ENCODE measurements at regions of chr19 and their contacts with region 1.

Region 1: GRCh38 chr19:41226053-41226873 is 7.2 kb downstream of the AXL start:
- DNase-seq: peak; percentile 70 to 81 (median 75)
- ATAC-seq: peak; percentile 27 to 81 (median 72)
- H3K4me3 ChIP-seq: peak overlapping the region; percentile 21 to 62 (median 53)
- H3K27ac ChIP-seq: peak overlapping the region; percentile 60 to 94 (median 79)
- H3K4me1 ChIP-seq: peaks cover 0 to 26% (median 14%) of the 10 kb centered on the region in 12 donors
- H3K27me3 ChIP-seq: peaks cover 0 to 17% (median 0%) of the 10 kb centered on the region in 9 donors
- CTCF ChIP-seq: peak in 2 of 12 donors; percentile 20 to 22
- POLR2A ChIP-seq: peak in 1 of 2 donors; percentile 18

Region 2: DNA sequence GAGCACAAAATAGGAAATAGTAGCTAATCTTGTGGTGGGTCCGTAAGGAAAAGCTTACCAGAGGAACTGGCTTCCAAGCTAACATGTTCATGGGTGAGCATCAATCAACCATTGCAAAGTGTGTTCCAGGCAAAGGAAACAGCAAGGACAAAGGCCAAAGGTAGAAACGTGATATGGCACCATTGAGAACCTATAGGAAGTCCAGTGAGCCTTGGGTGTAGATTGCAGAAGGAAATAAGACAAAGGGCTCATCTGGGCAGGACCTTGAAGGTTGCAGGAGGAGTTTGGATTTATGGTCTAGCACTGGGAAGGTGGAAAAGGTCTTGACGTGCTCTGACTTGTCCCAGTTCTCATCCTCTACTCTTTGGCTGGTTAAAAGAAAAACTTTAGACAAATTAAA is 212.9 kb before region 1 on chr19:
- intact Hi-C with region 1: no loop called
- DNase-seq: no peak
- ATAC-seq: no peak
- H3K4me3 ChIP-seq: no peak overlapping the region
- H3K27ac ChIP-seq: no peak overlapping the region
- H3K4me1 ChIP-seq: no peaks in the 10 kb centered on the region
- H3K27me3 ChIP-seq: peaks cover 0 to 31% (median 8%) of the 10 kb centered on the region in 9 donors
- CTCF ChIP-seq: no peak
- POLR2A ChIP-seq: no peak

Region 3: GRCh38 chr19:41298348-41298964 is 72.2 kb after region 1 on chr19:
- intact Hi-C with region 1: loop called in 1 of 10 experiments (anchors 2 kb)
- DNase-seq: peak; percentile 85 to 91 (median 91)
- ATAC-seq: peak; percentile 74 to 87 (median 82)
- H3K4me3 ChIP-seq: peak overlapping the region in 1 of 12 donors; percentile 10
- H3K27ac ChIP-seq: peak overlapping the region; percentile 78 to 96 (median 88)
- H3K4me1 ChIP-seq: peaks cover 6 to 75% (median 48%) of the 10 kb centered on the region in 12 donors
- H3K27me3 ChIP-seq: no peaks in the 10 kb centered on the region
- CTCF ChIP-seq: no peak
- POLR2A ChIP-seq: peak in 1 of 2 donors; percentile 31

Region 4: DNA sequence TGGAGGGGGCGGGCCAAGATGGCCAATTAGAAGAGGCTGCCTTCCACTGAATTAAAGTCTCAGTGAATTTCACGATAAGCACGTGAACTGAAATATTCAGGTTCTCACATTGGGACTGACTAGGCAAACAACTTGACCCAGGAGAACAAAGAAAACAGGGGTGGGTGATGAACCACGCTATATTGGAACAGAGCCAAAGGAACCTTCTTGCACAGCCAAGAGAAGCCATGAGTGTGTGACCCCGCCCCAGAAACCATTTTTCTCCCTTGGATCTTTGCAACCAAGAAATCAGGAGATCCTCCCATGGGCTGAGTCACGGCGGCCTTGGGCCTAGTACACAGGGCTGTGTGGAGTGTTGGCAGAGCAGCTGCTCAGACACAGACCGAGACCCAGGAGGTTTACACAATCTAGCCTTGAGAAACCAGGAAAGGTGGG is 253.5 kb after region 1 on chr19:
- intact Hi-C with region 1: no loop called
- DNase-seq: peak in 4 of 5 donors; percentile 60 to 80 (median 62)
- ATAC-seq: peak; percentile 83 to 88 (median 86)
- H3K4me3 ChIP-seq: peak overlapping the region in 8 of 12 donors; percentile 17 to 55 (median 32)
- H3K27ac ChIP-seq: peak overlapping the region in 11 of 12 donors; percentile 56 to 89 (median 80)
- H3K4me1 ChIP-seq: peaks cover 0 to 33% (median 11%) of the 10 kb centered on the region in 12 donors
- H3K27me3 ChIP-seq: peaks cover 0 to 22% (median 4%) of the 10 kb centered on the region in 9 donors
- CTCF ChIP-seq: no peak
- POLR2A ChIP-seq: no peak